Activated CD4-positive, alpha-beta memory T cell treated with anti-CD3 and anti-CD28 coated beads for 36 hours (primary cell): ENCODE measurements at regions of chr5 and their contacts with region 1.

Region 1: GRCh38 chr5:40277161-40277906 is 402.4 kb upstream of the PTGER4 start:
- DNase-seq: peak; percentile 63
- H3K4me3 Mint-ChIP-seq: peak overlapping the region; percentile 18
- H3K27ac Mint-ChIP-seq: peak overlapping the region; percentile 97
- H3K4me1 Mint-ChIP-seq: peaks cover 61% of the 10 kb centered on the region
- H3K27me3 Mint-ChIP-seq: no peaks in the 10 kb centered on the region

Region 2: GRCh38 chr5:40210694-40211093 is 66.6 kb before region 1 on chr5:
- CTCF ChIA-PET with region 1: no interaction called
- POLR2A ChIA-PET with region 1: interaction called, 7 read pairs
- intact Hi-C with region 1: loop called (anchors 1 kb)
- DNase-seq: no peak
- H3K4me3 Mint-ChIP-seq: no peak overlapping the region
- H3K27ac Mint-ChIP-seq: peak overlapping the region; percentile 94
- H3K4me1 Mint-ChIP-seq: peaks cover 65% of the 10 kb centered on the region
- H3K27me3 Mint-ChIP-seq: no peaks in the 10 kb centered on the region

Region 3: GRCh38 chr5:40307920-40308319 is 30.6 kb after region 1 on chr5:
- CTCF ChIA-PET with region 1: no interaction called
- POLR2A ChIA-PET with region 1: no interaction called
- intact Hi-C with region 1: loop called (anchors 1 kb)
- DNase-seq: no peak
- H3K4me3 Mint-ChIP-seq: no peak overlapping the region
- H3K27ac Mint-ChIP-seq: no peak overlapping the region
- H3K4me1 Mint-ChIP-seq: peaks cover 9% of the 10 kb centered on the region
- H3K27me3 Mint-ChIP-seq: no peaks in the 10 kb centered on the region

Region 4: DNA sequence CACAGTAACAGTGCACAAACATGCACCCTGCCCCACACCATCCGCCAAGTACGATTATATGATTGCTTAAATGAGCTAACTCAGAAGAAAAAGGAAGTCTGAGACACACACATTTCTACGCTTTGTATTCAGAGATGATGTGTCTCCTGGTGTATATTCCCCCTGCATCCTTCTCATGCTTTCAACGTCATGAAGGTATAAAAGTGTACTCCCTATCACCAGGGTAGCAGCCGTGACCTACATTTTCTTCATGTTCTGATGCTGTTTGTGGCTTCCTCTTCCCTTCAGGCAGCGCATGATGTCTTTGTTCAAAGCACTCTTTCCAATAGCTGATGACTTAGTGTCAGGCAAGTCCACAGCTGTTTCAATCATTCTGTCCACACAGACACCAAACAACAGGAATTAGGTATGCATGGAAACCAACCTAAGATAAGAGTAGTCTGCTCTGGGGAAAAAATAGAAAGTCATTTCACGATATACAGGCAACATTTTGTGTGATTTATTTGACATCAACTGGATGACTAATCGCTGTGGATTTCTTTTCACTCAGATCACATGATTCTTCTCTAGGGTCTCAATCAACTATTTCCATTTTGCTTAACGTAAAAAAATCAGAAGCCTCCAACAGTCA is 133.0 kb after region 1 on chr5:
- CTCF ChIA-PET with region 1: no interaction called
- POLR2A ChIA-PET with region 1: interaction called, 13 read pairs
- intact Hi-C with region 1: loop called (anchors 1 kb)
- DNase-seq: peak; percentile 82
- H3K4me3 Mint-ChIP-seq: peak overlapping the region; percentile 62
- H3K27ac Mint-ChIP-seq: peak overlapping the region; percentile 99
- H3K4me1 Mint-ChIP-seq: peaks cover 64% of the 10 kb centered on the region
- H3K27me3 Mint-ChIP-seq: no peaks in the 10 kb centered on the region

Region 5: DNA sequence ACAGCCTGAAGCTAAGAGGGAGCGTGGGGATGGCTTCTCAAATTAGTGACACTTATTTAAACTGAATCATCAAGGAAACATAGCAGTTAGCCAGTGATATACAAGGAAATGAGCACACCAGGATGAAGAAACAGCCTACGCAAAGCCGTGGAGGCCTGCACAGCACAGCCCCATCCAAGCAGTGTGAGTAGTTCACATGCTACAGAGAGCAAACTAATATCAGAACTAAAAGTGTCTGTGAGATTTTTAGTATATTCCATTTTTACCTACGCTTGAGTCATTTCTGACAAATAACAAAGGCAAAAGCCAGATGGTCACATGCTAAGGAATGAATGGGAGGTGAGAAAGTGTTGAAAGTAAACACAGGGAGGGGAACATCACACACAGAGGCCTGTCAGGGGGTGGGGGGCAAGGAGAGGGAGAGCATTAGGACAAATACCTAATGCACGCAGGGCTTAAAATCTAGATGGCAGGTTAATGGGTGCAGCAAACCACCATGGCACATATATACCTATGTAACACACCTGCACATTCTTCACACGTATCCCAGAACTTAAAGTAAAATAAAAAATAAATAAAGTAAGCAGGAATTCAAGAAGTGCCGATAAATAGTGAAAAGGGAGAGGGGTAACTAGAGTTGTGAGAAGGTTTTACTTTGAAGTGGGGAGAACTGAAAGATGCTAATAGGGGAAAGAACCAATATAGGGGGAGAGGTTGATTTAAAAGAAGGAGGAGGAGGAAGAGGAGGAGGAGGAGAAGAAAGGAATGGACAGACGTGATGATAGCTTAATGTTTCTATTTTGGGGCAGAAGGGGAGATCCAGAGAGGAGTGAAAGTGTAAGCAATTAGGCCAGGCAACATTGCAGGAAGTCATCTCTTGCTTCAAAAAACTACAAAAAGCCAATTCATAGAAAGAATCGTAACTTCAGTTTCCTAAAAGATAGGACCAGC is 301.4 kb after region 1 on chr5:
- CTCF ChIA-PET with region 1: no interaction called
- POLR2A ChIA-PET with region 1: no interaction called
- intact Hi-C with region 1: loop called (anchors 1 kb)
- DNase-seq: peak; percentile 86
- H3K4me3 Mint-ChIP-seq: peak overlapping the region; percentile 48
- H3K27ac Mint-ChIP-seq: peak overlapping the region; percentile 66
- H3K4me1 Mint-ChIP-seq: peaks cover 38% of the 10 kb centered on the region
- H3K27me3 Mint-ChIP-seq: no peaks in the 10 kb centered on the region